MCF 10A (cell line): ENCODE measurements at regions of chr6 and their contacts with region 1.

Region 1: GRCh38 chr6:154928325-154928922 is 66.7 kb upstream of the TIAM2 start:
- DNase-seq: peak; percentile 77
- H3K4me3 Mint-ChIP-seq: no peak overlapping the region
- H3K27ac Mint-ChIP-seq: no peak overlapping the region
- H3K4me1 Mint-ChIP-seq: peaks cover 24% of the 10 kb centered on the region
- H3K27me3 Mint-ChIP-seq: no peaks in the 10 kb centered on the region
- CTCF ChIP-seq: peak; percentile 84

Region 2: DNA sequence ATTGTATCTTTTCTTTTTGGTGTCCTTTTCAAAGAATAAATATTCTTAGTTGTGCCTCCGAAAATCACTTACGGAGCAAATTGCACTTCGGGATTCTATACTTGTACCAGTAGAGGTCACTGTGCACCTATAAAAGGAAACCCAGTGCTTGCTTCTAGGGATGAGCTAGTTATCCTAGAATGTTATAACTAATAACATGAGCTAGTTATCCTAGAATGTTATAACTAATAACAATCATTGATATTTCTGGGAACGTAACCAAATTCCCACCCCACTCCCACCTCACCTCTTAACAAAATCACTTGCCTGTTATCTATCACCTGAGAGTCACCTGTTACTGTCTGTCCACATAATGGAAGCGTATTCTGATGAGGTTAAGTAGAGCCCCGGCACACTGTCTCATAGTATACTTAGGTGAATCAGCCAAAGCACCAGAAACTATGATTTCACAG is 60.3 kb before region 1 on chr6:
- CTCF ChIA-PET with region 1: interaction called, 11 read pairs
- POLR2A ChIA-PET with region 1: interaction called, 4 read pairs
- intact Hi-C with region 1: loop called (anchors 2 kb)
- DNase-seq: peak; percentile 66
- H3K4me3 Mint-ChIP-seq: no peak overlapping the region
- H3K27ac Mint-ChIP-seq: no peak overlapping the region
- H3K4me1 Mint-ChIP-seq: peaks cover 5% of the 10 kb centered on the region
- H3K27me3 Mint-ChIP-seq: no peaks in the 10 kb centered on the region
- CTCF ChIP-seq: peak; percentile 49